MCF 10A (cell line): ENCODE measurements at regions of chr6 and their contacts with region 1.

Region 1: DNA sequence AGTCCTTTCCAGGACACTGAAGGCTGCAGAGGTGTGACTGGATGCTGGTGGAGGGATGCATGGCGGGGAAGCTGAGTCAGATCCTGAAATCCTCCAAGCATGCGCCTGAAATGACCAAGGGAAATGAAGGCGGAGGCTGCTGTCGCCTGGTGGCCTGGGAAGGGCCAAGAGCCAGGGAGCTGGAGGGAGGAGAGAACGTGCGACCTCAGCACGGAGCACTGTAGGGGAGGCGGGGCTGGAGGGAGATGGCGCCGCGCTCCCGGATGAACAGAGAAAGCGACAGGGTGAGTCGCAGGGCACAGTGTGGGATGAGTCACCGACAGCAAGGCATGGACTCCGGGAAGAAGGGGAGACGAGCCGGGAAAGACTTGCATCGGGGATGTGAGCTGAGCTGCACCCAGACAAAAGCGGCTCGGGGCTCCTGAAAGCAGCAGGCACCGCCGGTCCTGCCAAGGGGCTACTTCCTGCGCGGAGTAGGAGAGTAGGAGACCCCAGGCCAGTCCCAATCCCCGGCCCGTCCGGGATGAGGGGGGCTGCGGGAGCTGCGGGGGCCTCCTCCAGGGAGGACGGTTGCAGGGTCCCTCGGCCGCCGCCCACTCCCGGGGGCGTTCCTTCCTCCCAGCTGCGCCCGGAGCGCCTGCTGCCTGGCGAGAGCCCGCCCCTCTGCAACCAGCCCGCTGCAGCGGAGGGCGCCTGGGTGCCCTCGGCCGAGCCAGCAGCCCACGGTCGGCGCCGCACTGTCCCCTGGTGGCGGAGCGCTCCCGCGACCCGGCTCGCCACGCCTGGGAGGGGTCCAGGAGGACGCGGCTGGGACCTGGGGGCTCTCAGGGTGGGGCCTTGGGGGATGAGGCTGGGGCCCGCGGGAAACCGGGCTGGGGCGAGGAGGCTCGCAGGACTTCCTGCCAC is 11.0 kb upstream of the NQO2 start:
- DNase-seq: peak; percentile 90
- H3K4me3 Mint-ChIP-seq: peak overlapping the region; percentile 87
- H3K27ac Mint-ChIP-seq: peak overlapping the region; percentile 100
- H3K4me1 Mint-ChIP-seq: peaks cover 31% of the 10 kb centered on the region
- H3K27me3 Mint-ChIP-seq: no peaks in the 10 kb centered on the region
- CTCF ChIP-seq: peak; percentile 86

Region 2: DNA sequence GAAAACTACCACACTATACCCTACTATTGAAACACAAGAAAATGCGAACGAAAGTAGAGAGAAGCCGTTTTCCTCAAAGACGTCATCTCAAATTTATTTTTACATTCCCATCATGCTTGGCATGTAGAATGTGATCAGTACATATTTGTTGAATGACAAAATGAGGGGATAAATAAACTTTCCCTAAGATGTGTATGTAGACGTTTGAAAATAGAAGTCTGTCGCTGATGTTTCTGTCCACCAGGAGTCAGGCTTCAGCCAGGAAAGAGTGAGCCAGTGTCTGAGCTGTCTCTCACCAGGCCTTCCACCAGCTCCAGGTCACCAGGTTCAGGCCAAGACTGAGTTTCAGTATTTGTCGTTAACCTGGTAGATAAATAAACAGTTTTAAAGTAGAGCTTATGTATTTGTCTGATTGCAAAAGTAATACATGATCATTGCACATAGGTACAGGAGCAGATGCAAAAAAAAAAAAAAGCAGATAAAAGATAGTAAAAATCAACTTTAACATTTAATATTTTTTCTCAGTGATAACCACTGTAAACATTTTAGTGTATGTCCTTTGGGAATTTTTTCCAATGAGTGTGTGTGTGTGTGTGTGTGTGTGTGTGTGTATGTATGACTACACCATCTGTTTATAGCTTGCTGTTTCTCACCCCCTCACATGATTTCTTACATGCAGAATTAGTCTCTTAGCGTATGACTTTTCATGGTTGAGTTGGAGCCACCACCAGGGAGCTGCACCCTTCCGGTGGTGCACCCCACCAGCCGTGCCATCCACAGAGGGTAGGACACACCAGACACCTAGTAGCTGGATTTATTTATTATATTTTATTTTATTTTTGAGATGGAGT is 197.3 kb before region 1 on chr6:
- CTCF ChIA-PET with region 1: interaction called, 12 read pairs
- POLR2A ChIA-PET with region 1: interaction called, 10 read pairs
- intact Hi-C with region 1: loop called (anchors 1 kb)
- DNase-seq: peak; percentile 83
- H3K4me3 Mint-ChIP-seq: no peak overlapping the region
- H3K27ac Mint-ChIP-seq: peak overlapping the region; percentile 75
- H3K4me1 Mint-ChIP-seq: peaks cover 27% of the 10 kb centered on the region
- H3K27me3 Mint-ChIP-seq: no peaks in the 10 kb centered on the region
- CTCF ChIP-seq: peak; percentile 82

Region 3: GRCh38 chr6:2818593-2818992 is 170.1 kb before region 1 on chr6:
- CTCF ChIA-PET with region 1: no interaction called
- POLR2A ChIA-PET with region 1: interaction called, 12 read pairs
- intact Hi-C with region 1: no loop called
- DNase-seq: no peak
- H3K4me3 Mint-ChIP-seq: no peak overlapping the region
- H3K27ac Mint-ChIP-seq: peak overlapping the region; percentile 90
- H3K4me1 Mint-ChIP-seq: peaks cover 28% of the 10 kb centered on the region
- H3K27me3 Mint-ChIP-seq: no peaks in the 10 kb centered on the region
- CTCF ChIP-seq: no peak

Region 4: DNA sequence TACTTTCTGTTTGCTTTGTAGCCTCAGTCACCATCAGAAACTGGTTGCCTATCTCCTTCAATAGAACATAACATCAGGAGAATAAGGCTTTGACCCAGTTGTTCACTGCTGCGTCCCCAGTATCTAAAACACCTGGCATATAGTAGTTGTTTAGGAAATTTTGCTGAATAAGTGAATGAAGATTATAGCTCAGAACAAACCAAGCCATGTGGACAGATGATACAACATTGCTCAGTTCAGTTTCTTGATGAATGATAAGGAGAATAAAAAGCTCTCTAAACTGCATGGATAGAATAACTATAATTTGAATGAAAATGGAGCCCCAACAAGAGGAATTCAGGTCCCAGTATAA is 141.8 kb before region 1 on chr6:
- CTCF ChIA-PET with region 1: interaction called, 17 read pairs
- POLR2A ChIA-PET with region 1: interaction called, 50 read pairs
- intact Hi-C with region 1: loop called (anchors 1 kb)
- DNase-seq: no peak
- H3K4me3 Mint-ChIP-seq: peak overlapping the region; percentile 54
- H3K27ac Mint-ChIP-seq: peak overlapping the region; percentile 71
- H3K4me1 Mint-ChIP-seq: peaks cover 19% of the 10 kb centered on the region
- H3K27me3 Mint-ChIP-seq: no peaks in the 10 kb centered on the region
- CTCF ChIP-seq: no peak

Region 5: GRCh38 chr6:2971420-2972218 is 17.1 kb before region 1 on chr6 and contains the start of gene SERPINB6:
- CTCF ChIA-PET with region 1: interaction called, 10 read pairs
- POLR2A ChIA-PET with region 1: interaction called, 65 read pairs
- intact Hi-C with region 1: loop called (anchors 1 kb)
- DNase-seq: peak; percentile 59
- H3K4me3 Mint-ChIP-seq: peak within 1 kb of the TSS; percentile 81
- H3K27ac Mint-ChIP-seq: peak within 1 kb of the TSS; percentile 79
- H3K4me1 Mint-ChIP-seq: peaks cover 6% of the 10 kb centered on the region
- H3K27me3 Mint-ChIP-seq: no peaks in the 10 kb centered on the region
- CTCF ChIP-seq: no peak
- total RNA-seq, gene SERPINB6: 68.5 and 75.6 TPM in 2 replicates

Region 6: GRCh38 chr6:2999618-3000557 is 11.2 kb after region 1 on chr6 and contains the start of gene NQO2:
- CTCF ChIA-PET with region 1: interaction called, 28 read pairs
- POLR2A ChIA-PET with region 1: interaction called, 78 read pairs
- intact Hi-C with region 1: no loop called
- DNase-seq: peak; percentile 90
- H3K4me3 Mint-ChIP-seq: peak within 1 kb of the TSS; percentile 80
- H3K27ac Mint-ChIP-seq: peak within 1 kb of the TSS; percentile 37
- H3K4me1 Mint-ChIP-seq: peaks cover 12% of the 10 kb centered on the region
- H3K27me3 Mint-ChIP-seq: no peaks in the 10 kb centered on the region
- CTCF ChIP-seq: no peak
- total RNA-seq, gene NQO2: 18.6 and 20.0 TPM in 2 replicates

Region 7: GRCh38 chr6:3068329-3069214 is 79.9 kb after region 1 on chr6 and contains the start of gene RIPK1:
- CTCF ChIA-PET with region 1: interaction called, 4 read pairs
- POLR2A ChIA-PET with region 1: interaction called, 39 read pairs
- intact Hi-C with region 1: no loop called
- DNase-seq: peak; percentile 88
- H3K4me3 Mint-ChIP-seq: peak within 1 kb of the TSS; percentile 93
- H3K27ac Mint-ChIP-seq: peak within 1 kb of the TSS; percentile 93
- H3K4me1 Mint-ChIP-seq: peaks cover 12% of the 10 kb centered on the region
- H3K27me3 Mint-ChIP-seq: no peaks in the 10 kb centered on the region
- CTCF ChIP-seq: no peak
- total RNA-seq, gene RIPK1: 16.8 and 21.2 TPM in 2 replicates

Region 8: GRCh38 chr6:3306848-3307247 is 318.2 kb after region 1 on chr6:
- CTCF ChIA-PET with region 1: no interaction called
- POLR2A ChIA-PET with region 1: no interaction called
- intact Hi-C with region 1: no loop called
- DNase-seq: no peak
- H3K4me3 Mint-ChIP-seq: no peak overlapping the region
- H3K27ac Mint-ChIP-seq: no peak overlapping the region
- H3K4me1 Mint-ChIP-seq: peaks cover 9% of the 10 kb centered on the region
- H3K27me3 Mint-ChIP-seq: no peaks in the 10 kb centered on the region
- CTCF ChIP-seq: no peak